ENCODE measurements at regions of chr19 and their contacts with region 1.

Region 1: GRCh38 chr19:29610563-29611271 is 4.6 kb downstream of the POP4 start:
- DNase-seq: peak; percentile 68 to 88 (median 81)
- H3K4me3 ChIP-seq: peak overlapping the region in 3 of 59 donors; percentile 3 to 9 (median 5)
- H3K27ac ChIP-seq: peak overlapping the region in 16 of 59 donors; percentile 6 to 47 (median 26)
- H3K27me3 ChIP-seq: no peaks in the 10 kb centered on the region
- CTCF ChIP-seq: peak; percentile 60 to 96 (median 89)

Region 2: DNA sequence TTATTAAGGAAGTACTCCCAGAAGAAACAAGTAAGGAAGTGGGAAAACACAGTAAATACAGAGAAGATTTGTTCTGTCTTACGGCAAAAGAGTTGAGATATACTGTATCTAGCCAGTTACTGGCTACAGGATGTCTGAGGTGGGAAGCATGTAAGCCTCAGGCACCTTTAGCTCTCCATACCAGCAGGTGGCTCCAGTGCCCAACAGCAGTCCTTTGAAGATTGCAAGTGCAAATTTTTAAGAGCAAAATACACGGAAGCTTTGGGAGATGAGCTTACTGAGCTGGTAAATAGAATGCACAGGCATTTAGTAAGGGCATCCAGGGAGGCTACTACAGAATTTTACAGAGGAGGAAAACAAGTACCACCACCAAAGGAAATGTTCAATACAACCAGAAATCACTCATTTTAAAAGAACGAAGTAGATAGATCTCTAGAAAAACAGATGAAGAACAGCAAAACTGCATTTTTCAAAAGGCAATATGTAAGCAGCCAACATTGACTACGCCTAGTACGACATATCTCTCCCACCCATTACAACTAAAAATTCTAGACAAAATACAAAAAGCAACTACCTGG is 142.8 kb before region 1 on chr19:
- intact Hi-C with region 1: no loop called
- DNase-seq: peak in 6 of 10 donors; percentile 41 to 82 (median 58)
- H3K4me3 ChIP-seq: peak overlapping the region in 1 of 59 donors; percentile 8
- H3K27ac ChIP-seq: peak overlapping the region in 6 of 59 donors; percentile 16 to 67 (median 18)
- H3K27me3 ChIP-seq: peaks cover 0 to 2% (median 0%) of the 10 kb centered on the region in 45 donors
- CTCF ChIP-seq: peak in 55 of 56 donors; percentile 22 to 90 (median 65)

Region 3: GRCh38 chr19:29516821-29517395 is 93.8 kb before region 1 on chr19:
- intact Hi-C with region 1: no loop called
- DNase-seq: peak in 5 of 10 donors; percentile 3 to 18 (median 13)
- H3K4me3 ChIP-seq: no peak overlapping the region
- H3K27ac ChIP-seq: peak overlapping the region in 1 of 59 donors; percentile 15
- H3K27me3 ChIP-seq: no peaks in the 10 kb centered on the region
- CTCF ChIP-seq: no peak

Region 4: DNA sequence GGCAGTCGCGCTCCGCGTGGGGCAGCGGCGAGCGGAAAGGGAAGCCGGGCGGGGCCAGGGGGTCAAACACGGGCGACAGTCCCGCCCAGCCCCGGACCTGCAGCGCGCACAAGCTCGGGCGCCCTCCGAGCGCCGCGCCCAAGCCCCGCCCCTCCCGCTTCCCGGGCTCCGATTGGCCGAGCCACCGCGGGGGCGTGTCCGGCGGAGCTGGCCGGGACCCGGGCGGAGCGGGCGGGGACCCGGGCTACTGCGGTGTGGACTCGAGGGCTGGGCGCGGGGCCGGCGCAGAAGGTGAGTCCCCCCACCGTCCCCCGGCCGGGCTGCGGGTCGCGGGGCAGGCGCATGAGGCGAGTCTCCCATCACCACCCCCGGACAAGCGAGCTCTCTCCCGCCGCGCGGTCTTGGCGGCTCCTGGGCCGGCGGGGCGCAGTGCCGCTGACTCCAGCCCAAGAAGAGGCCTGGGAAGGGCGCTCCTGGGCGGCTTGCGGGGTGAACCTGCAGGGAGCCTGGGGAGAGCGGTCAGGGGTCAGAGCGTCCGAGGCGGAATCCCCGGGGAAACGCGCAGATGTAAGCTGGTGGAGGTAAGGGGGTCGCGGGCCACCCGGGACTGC is 54.6 kb after region 1 on chr19 and contains the start of gene PLEKHF1:
- intact Hi-C with region 1: loop called (anchors 2 to 5 kb)
- DNase-seq: peak; percentile 79 to 98 (median 90)
- H3K4me3 ChIP-seq: peak within 1 kb of the TSS; percentile 63 to 98 (median 89)
- H3K27ac ChIP-seq: peak within 1 kb of the TSS in 58 of 59 donors; percentile 19 to 90 (median 81)
- H3K27me3 ChIP-seq: no peaks in the 10 kb centered on the region
- CTCF ChIP-seq: peak in 11 of 56 donors; percentile 13 to 80 (median 43)
- total RNA-seq, gene PLEKHF1: 3.7 to 27.9 (median 8.5) TPM

Region 5: GRCh38 chr19:29694669-29695627 is 84.2 kb after region 1 on chr19:
- intact Hi-C with region 1: loop called (anchors 2 kb)
- DNase-seq: peak; percentile 86 to 94 (median 90)
- H3K4me3 ChIP-seq: peak overlapping the region in 1 of 59 donors; percentile 22
- H3K27ac ChIP-seq: peak overlapping the region; percentile 38 to 97 (median 90)
- H3K27me3 ChIP-seq: no peaks in the 10 kb centered on the region
- CTCF ChIP-seq: peak; percentile 69 to 98 (median 92)

Region 6: DNA sequence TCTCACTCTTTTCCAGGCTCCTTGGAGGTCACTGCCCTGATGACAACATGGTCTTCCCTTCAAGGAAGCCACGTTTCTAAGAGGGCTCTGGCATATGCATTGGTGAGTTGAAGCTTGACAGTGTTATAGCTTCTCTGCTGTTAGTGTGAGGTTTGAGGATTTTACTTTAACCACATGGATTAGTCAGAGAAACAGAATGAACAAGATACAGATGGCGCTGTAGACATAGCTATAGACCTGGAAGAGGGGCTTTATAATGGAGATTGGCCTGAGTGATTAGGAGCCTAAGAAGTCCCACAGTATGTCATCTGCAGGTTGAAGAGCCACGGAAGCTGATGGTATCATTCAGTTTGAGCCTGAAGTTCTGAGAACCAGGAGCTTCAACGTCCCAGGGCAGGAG is 312.9 kb after region 1 on chr19:
- intact Hi-C with region 1: no loop called
- DNase-seq: no peak
- H3K4me3 ChIP-seq: no peak overlapping the region
- H3K27ac ChIP-seq: no peak overlapping the region
- H3K27me3 ChIP-seq: no peaks in the 10 kb centered on the region
- CTCF ChIP-seq: no peak